ENCODE measurements at regions of chr17 and their contacts with region 1.

Region 1: GRCh38 chr17:1347589-1348323 is 52.3 kb downstream of the YWHAE start:
- DNase-seq: no peak
- CTCF ChIP-seq: no peak

Region 2: GRCh38 chr17:1122533-1123392 is 225.0 kb before region 1 on chr17:
- in situ Hi-C with region 1: loop called (anchors 25 kb)
- DNase-seq: peak; percentile 91
- CTCF ChIP-seq: peak; percentile 85

Region 3: GRCh38 chr17:1516388-1517161 is 168.8 kb after region 1 on chr17 and contains the start of gene INPP5K:
- in situ Hi-C with region 1: loop called (anchors 10 kb)
- DNase-seq: peak; percentile 99
- CTCF ChIP-seq: no peak